GM10248 (cell line): ENCODE measurements at regions of chr2 and their contacts with region 1.

Region 1: GRCh38 chr2:28566521-28567041 is 70.7 kb downstream of the PLB1 start:
- DNase-seq: peak; percentile 96
- CTCF ChIP-seq: peak; percentile 100

Region 2: DNA sequence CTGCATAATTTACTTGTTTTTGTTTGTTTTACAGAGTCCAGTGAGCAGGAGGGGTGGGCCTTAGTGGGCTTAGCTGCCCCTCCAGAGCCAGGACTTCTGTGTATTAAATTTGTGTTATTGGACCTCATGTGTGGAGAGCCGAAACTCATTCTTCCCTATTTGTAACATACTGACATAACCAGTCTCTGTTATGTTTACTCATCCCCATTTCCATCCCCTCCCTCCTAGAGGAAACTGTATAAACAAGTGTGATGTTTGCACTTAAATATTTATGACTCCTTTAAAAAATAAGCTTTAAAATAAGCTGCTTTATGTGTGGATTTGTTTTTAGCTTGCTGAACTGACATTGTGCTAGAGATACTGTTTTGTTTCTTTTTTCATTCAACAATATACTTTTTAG is 970.0 kb before region 1 on chr2:
- CTCF ChIA-PET with region 1: no interaction called
- POLR2A ChIA-PET with region 1: interaction called, 12 read pairs
- DNase-seq: no peak
- CTCF ChIP-seq: no peak

Region 3: DNA sequence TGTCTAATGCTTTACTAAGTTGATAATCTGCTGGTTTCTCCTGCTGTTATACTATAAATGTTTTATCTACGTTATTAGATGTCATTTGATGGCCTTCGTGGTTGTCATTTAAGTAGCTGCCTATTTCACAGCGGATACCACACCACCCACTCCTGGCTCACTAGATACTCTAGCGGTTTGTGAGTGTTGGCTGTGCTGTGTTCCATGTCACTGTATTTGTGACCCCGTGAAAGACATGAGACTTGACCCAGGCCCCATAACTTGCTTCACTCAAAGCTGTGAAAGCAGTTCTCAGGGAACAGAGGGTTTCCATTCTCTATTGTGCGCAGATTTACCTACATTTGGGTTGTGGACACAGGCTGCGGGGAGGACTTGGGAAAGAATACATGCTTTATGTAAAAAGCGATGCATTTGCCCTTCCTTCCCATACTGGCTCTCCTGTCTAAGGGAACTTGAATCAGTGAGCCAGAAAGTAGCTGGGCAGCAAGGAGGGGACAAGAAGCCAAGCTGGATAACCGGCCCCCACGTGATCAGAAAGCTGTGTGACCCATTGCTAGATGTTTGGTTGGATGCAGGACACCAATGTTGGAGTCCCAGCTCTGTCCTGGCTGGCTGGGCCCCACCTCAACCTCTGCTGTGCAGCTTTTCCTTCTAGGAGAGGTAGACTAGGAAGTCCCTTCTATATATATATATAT is 18.5 kb before region 1 on chr2:
- CTCF ChIA-PET with region 1: interaction called, 10 read pairs
- POLR2A ChIA-PET with region 1: no interaction called
- DNase-seq: no peak
- CTCF ChIP-seq: no peak

Region 4: DNA sequence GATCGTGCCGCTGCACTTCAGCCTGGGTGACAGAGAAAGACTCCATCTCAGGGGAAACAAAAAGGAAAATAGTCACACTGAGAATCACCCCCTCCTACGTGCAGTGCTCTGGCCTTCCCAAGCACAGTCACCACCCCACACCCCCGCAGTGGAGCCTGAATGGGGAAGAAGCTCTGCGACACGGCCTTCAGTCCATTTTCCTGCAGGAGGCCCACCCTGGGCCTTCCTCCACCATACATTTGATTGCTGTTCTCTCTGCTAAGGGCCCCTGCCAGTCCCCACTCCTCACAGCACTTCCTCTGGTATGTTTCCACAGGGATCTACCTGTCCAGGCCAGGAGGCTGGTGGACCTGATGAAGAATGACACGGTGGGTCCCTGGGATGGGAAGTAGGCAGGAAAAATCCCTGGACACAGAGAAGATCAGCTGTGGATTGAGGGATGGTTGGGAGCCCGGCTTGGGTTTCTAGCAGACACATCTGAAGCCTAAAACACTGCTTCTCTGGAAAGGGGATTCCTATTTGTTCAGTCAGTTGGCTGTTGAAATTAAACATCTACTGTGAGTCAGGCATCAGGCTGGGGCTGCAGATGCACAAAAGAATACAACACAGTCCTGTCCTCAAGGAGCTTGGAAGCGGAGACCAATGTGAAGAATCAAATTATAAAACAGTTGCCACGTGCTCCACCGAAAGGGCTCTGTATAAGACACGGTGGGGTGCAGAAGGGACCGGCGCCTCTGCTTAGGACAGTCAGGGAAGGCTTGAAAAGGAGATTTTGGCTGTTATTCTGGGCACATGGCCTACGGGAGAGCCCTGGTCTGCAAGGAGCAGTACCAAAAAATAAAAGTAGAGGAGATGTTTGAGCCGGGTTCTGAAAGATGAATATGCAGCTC is 11.5 kb after region 1 on chr2:
- CTCF ChIA-PET with region 1: interaction called, 47 read pairs
- POLR2A ChIA-PET with region 1: interaction called, 5 read pairs
- DNase-seq: no peak
- CTCF ChIP-seq: no peak

Region 5: DNA sequence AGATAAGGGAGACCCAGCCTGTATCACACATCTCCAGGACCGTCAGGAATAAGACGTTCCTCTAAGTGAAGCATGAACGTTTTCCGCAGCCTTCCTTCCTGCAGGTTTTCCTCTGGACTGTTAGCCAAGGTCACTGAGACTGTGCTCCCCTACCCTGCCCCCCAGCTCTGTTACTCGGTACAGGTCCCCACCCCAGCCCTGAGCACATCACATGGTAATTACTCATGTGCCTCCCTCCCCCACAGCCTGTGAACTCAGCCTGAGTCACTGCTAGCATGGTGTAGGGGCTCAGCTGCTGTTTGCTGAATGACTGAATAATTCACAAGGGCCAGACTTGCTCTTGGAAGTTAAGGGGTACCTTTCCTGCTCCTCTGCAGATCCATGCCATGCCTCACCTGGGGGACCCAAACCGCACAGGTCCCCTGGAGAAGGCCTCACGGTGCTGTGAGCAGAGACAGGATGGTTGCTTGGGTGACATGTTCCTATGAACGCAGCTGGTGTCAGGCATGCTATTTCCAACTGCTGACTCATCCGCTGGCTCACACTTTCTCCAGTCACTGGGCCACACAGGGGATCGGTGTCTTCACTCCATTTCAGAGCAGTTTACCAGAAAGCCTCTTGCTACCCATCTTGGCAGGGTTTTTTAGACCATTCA is 17.4 kb after region 1 on chr2:
- CTCF ChIA-PET with region 1: interaction called, 47 read pairs
- POLR2A ChIA-PET with region 1: no interaction called
- DNase-seq: no peak
- CTCF ChIP-seq: no peak

Region 6: DNA sequence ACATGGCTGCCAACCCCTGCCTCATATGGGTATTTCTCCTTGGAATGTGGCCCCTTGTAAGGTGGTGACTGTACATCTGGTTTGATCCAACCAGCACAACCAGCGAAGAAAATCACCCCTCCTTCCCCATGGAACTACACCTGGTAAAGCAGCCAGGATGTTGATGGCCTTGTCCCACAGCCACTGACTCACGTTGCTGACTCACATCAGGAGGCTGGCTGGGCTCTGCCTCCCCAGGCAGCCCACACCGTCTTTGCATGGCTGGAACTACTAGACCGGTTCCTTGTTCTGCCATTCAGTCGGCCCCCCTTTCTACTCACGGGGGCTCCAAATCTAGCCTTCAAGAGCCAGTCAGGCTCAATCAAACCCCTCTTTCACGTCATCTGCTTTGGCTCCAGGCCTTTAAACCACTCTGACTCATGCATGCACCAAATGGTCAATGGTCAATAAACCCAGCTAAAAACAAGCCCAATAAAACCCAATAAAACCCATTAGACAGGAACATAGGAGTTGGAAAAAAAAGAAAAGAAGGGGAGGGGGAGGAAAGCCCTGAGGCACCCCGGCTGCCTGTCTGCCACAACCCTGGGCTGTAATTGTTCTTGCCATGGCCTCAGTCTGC is 44.1 kb after region 1 on chr2:
- CTCF ChIA-PET with region 1: interaction called, 12 read pairs
- POLR2A ChIA-PET with region 1: no interaction called
- DNase-seq: peak; percentile 53
- CTCF ChIP-seq: no peak

Region 7: GRCh38 chr2:28716265-28716867 is 149.8 kb after region 1 on chr2:
- CTCF ChIA-PET with region 1: no interaction called
- POLR2A ChIA-PET with region 1: no interaction called
- DNase-seq: peak; percentile 38
- CTCF ChIP-seq: no peak